ENCODE measurements at regions of chr16 and their contacts with region 1.

Region 1: DNA sequence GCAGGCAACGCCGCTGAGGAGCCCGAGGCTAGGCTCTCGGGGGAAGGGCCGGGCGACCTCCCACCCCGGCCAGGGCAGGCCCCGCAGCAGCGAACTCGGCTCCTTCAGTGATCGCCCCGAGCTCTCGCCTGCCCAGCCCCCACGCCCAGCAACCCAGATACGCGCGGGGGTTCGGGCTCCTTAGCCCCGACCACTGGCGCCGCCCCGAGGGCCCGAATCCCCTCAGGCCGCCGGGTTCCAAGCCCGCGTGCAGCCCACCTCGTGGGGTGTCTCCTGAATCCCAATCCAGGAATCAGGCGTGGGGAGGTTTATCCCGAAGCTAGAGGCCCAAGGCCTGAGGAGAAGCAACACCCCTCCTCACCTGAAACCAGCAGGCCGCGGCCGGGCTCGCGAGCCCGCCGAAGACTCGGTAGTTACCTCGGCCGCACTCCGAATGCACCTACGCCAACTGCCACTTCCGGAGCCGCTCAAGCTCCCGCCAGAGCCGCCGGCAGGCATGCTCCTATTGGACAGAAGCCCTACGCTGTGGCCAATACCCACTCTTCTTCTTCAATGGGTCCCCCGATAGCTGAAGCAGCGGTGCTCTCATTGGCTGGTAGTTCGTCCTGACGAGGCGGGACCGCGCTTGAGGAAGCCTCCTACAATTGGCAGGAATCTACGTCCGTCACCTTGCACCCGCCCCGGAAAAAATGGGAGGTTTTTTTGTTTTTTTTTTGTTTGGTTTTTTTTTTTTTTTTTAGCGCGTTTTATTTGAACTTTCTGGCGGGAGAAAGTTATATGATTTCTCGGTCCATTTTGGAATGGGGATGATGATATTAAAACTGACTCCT is at the start of gene RFWD3:
- DNase-seq: peak; percentile 93 to 96
- H3K4me3 ChIP-seq: peak within 1 kb of the TSS; percentile 77 to 93 (median 90)
- H3K27ac ChIP-seq: peak within 1 kb of the TSS; percentile 95
- H3K4me1 ChIP-seq: peaks cover 0 to 3% (median 0%) of the 10 kb centered on the region in 4 experiments; a peak in 1 of 7 replicates
- H3K27me3 ChIP-seq: no peaks in the 10 kb centered on the region
- CTCF ChIP-seq: no peak
- EP300 ChIP-seq: no peak
- POLR2A ChIP-seq: peak; percentile 92 to 95
- RAD21 ChIP-seq: no peak
- total RNA-seq, gene RFWD3: 114 and 123 TPM in 2 replicates

Region 2: GRCh38 chr16:74606521-74607310 is 59.9 kb before region 1 on chr16 and contains the start of gene GLG1:
- CTCF ChIA-PET with region 1: no interaction called
- POLR2A ChIA-PET with region 1: interaction called, 11 read pairs
- DNase-seq: peak; percentile 74 to 88
- H3K4me3 ChIP-seq: peak within 1 kb of the TSS; percentile 71 to 92 (median 89)
- H3K27ac ChIP-seq: peak within 1 kb of the TSS; percentile 85
- H3K4me1 ChIP-seq: peaks cover 2 to 7% (median 6%) of the 10 kb centered on the region in 4 experiments; a peak in 5 of 7 replicates
- H3K27me3 ChIP-seq: no peaks in the 10 kb centered on the region
- CTCF ChIP-seq: no peak
- EP300 ChIP-seq: no peak
- POLR2A ChIP-seq: peak; percentile 89 to 92
- RAD21 ChIP-seq: peak in 1 of 2 experiments; percentile 6; a peak in 1 of 4 replicates
- total RNA-seq, gene GLG1: 137 and 139 TPM in 2 replicates

Region 3: GRCh38 chr16:74650966-74651567 is 15.6 kb before region 1 on chr16:
- CTCF ChIA-PET with region 1: interaction called, 13 read pairs
- POLR2A ChIA-PET with region 1: interaction called, 13 read pairs
- DNase-seq: no peak
- H3K4me3 ChIP-seq: no peak overlapping the region
- H3K27ac ChIP-seq: no peak overlapping the region
- H3K4me1 ChIP-seq: no peaks in the 10 kb centered on the region
- H3K27me3 ChIP-seq: no peaks in the 10 kb centered on the region
- CTCF ChIP-seq: peak in 1 of 3 experiments; percentile 29; a peak in 2 of 4 replicates
- EP300 ChIP-seq: no peak
- POLR2A ChIP-seq: no peak
- RAD21 ChIP-seq: no peak

Region 4: DNA sequence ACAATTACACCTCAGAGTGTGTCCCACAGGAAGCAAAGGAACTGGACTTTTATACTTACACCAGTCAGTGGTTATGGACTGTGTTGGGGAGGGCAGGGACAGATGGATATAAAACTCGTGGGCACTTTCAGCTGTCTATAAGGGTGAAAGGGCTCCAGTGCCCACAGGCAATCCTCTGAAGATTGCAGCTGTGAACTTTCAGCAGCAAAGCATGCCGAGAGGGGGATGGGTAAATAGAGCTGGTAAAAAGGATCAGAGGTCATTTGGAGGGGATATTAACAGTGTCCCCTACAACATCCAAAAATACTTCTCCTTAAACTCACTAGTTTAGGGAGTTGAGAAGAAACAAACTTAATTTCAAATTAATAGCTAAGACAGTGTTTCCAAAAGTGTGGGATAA is 13.3 kb after region 1 on chr16:
- CTCF ChIA-PET with region 1: interaction called, 5 read pairs
- POLR2A ChIA-PET with region 1: interaction called, 37 read pairs
- DNase-seq: no peak
- H3K4me3 ChIP-seq: no peak overlapping the region
- H3K27ac ChIP-seq: no peak overlapping the region
- H3K4me1 ChIP-seq: no peaks in the 10 kb centered on the region
- H3K27me3 ChIP-seq: no peaks in the 10 kb centered on the region
- CTCF ChIP-seq: no peak
- EP300 ChIP-seq: no peak
- POLR2A ChIP-seq: no peak
- RAD21 ChIP-seq: no peak

Region 5: DNA sequence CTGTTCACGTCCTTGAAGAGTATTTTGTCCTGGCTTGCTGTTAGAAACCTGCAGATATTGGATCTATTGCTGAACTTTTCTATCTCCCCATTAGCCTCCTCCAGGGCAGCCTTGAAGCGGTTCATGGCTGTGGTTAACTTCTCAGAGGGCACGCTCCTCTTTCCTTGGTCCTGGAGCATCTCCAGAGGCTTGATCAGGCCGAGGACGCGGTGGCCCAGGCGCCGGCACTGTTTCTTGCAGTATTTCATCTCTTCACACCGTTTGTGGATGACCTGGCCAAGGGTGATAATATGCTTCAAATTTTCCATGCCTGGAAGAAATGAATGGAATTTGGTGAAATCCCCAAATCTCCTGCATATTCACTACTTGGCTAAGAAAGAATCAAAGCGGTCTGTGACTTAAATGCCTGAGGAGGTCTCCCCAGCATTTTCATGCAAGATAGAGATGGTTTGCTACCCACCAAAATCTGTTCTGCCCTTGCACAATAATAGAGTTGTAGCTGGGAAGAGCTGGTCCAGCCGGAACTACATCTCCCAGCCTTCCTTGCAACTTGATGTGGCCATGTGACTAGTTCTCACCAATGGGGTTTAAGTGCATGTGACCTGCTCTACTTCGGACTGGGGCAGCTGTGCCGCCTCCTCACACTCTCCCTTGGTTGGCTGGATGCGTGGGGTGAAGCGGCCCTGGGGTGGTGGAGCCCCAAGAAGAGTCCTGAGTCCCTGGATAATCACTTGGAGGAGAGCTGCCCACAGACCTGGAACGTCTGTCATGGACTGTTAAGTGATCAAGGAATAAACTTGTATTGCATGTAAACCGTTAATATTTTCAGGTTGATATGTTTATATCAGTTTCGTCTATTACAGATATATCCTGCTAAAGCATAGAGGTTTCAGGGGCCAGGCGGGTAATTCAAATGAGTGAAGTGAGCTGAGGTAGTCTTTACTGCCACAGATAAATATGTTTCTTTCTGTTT is 29.1 kb after region 1 on chr16:
- CTCF ChIA-PET with region 1: interaction called, 5 read pairs
- POLR2A ChIA-PET with region 1: interaction called, 12 read pairs
- DNase-seq: peak; percentile 41 to 80
- H3K4me3 ChIP-seq: peak overlapping the region; percentile 23 to 56 (median 34); a peak in 5 of 8 replicates
- H3K27ac ChIP-seq: no peak overlapping the region
- H3K4me1 ChIP-seq: peaks cover 0 to 3% (median 2%) of the 10 kb centered on the region in 4 experiments; a peak in 4 of 7 replicates
- H3K27me3 ChIP-seq: peaks cover 0 to 8% (median 3%) of the 10 kb centered on the region in 4 experiments; a peak in 3 of 7 replicates
- CTCF ChIP-seq: no peak
- EP300 ChIP-seq: no peak
- POLR2A ChIP-seq: peak in 1 of 2 experiments; percentile 60; a peak in 1 of 3 replicates
- RAD21 ChIP-seq: no peak

Region 6: DNA sequence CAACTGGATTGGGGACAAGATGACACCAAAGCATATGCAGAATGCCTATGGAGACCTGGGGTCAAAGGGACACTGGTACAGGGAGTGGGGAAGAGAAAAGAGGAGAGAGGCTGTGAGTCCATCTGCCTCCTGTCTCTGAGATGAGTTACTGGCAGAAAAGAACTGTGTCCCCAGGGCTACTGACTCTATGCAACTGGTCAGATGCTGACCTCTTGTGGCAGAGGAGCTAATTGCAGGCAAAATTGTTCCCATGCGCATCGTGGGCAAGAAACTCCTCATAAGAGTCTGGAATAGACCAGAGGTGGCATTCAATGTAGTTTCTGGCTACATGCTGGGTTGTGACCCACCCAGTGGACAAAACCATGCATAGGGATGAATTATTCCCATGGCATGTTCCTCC is 60.1 kb after region 1 on chr16:
- CTCF ChIA-PET with region 1: interaction called, 10 read pairs
- POLR2A ChIA-PET with region 1: interaction called, 6 read pairs
- DNase-seq: peak; percentile 58 to 86
- H3K4me3 ChIP-seq: no peak overlapping the region
- H3K27ac ChIP-seq: no peak overlapping the region
- H3K4me1 ChIP-seq: peaks cover 2 to 10% (median 5%) of the 10 kb centered on the region in 4 experiments; a peak in 5 of 7 replicates
- H3K27me3 ChIP-seq: 0 out of 7 replicates have a peak, but pooled peaks cover 0 to 2% (median 0%) of the 10 kb centered on the region in 4 experiments
- CTCF ChIP-seq: peak; percentile 59 to 91 (median 83)
- EP300 ChIP-seq: no peak
- POLR2A ChIP-seq: no peak
- RAD21 ChIP-seq: peak; percentile 77 to 82

Measured in H1 (cell line).